ENCODE measurements at regions of chr17 and their contacts with region 1.

Region 1: DNA sequence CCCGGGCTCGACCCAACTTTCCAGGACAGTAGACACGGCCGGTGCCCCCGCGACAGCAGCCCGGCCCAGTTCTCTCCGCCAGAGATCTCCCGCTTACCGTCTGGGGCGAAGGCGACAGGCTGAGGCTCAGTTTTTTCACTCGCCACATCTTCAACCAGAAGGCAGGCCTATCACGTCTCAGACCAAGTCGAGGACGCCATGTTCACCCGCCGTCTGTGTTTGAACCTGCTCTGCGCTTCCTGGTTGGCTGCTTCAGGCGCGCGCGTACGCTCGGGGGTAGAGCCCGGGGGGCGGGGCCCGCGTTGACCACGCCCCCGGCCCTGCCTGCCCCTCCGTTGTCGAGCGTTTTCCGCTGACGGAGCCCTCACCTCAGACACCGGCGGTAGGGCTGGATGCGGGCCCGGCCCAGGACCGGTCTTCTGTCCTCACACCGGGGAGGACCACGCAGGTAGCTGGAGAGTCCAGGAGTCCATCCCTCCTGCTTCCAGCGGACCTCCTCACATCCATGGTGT is at the start of gene SPAG5:
- DNase-seq: peak; percentile 84 to 97 (median 93)
- ATAC-seq: peak; percentile 94 to 98 (median 95)
- H3K4me3 ChIP-seq: peak within 1 kb of the TSS; percentile 59 to 84
- H3K4me3 Mint-ChIP-seq: peak within 1 kb of the TSS; percentile 86 to 94 (median 89)
- H3K27ac ChIP-seq: peak within 1 kb of the TSS; percentile 93
- H3K27ac Mint-ChIP-seq: peak within 1 kb of the TSS; percentile 97
- H3K4me1 ChIP-seq: peaks cover 4 to 13% of the 10 kb centered on the region in 2 experiments
- H3K4me1 Mint-ChIP-seq: peaks cover 20 to 26% (median 22%) of the 10 kb centered on the region in 3 donors
- H3K27me3 ChIP-seq: no peaks in the 10 kb centered on the region
- H3K27me3 Mint-ChIP-seq: no peaks in the 10 kb centered on the region
- total RNA-seq, gene SPAG5: 7.7 to 26.5 (median 10.3) TPM

Region 2: DNA sequence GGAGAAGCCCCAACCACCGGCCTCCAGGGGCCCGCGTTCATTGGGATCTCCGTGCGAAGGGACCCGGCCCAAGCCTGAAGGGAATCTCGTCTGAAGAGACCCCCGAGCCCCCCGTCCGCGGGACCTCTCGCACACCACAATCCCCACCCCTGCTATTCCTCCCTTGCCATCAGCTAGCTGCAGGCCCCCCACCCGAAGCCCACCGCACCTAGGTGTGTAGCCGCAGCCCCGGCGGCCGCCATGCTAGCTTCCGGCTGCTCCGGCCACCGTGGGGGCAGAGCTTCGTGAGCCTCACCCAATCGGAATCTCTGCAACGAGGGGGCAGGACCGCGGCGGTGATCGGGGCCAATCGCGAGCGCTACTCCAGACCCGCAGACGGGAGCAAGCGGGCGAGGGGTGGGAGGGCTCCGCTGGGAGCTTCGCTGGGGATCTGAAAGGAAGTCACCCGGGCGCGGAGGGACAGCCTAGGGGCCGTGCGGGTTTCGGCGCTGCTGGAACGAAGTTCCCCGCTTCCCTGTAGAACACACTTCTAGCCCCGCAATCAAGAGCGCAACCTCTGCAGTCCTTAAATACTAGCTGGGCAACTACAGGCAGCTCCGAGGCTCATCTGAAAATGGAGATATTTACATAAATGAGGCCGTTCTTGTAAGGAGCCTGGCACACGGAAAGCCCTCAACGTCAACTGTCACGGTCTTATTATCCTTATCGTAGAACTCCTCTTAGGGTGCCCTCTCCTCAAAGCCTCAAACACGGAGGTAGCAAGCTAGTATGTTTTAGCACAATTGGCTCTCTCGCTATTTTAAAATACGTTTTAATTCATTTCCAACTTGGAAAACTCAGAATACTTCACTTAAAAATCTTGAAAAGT is 27.4 kb before region 1 on chr17 and contains the start of gene PIGS:
- CTCF ChIA-PET with region 1: interaction called in 1 of 2 experiments, 9 read pairs
- POLR2A ChIA-PET with region 1: interaction called, 3 to 15 read pairs
- DNase-seq: peak; percentile 73 to 93 (median 85)
- ATAC-seq: peak; percentile 97 to 98 (median 98)
- H3K4me3 ChIP-seq: peak within 1 kb of the TSS; percentile 86 to 95
- H3K4me3 Mint-ChIP-seq: peak within 1 kb of the TSS; percentile 93 to 97 (median 97)
- H3K27ac ChIP-seq: peak within 1 kb of the TSS; percentile 83
- H3K27ac Mint-ChIP-seq: peak within 1 kb of the TSS; percentile 92 to 93
- H3K4me1 ChIP-seq: peaks cover 18 to 47% of the 10 kb centered on the region in 2 experiments
- H3K4me1 Mint-ChIP-seq: peaks cover 61 to 72% (median 68%) of the 10 kb centered on the region in 3 donors
- H3K27me3 ChIP-seq: no peaks in the 10 kb centered on the region
- H3K27me3 Mint-ChIP-seq: no peaks in the 10 kb centered on the region
- total RNA-seq, gene PIGS: 54.9 to 63.0 (median 60.9) TPM

Region 3: GRCh38 chr17:28576758-28577465 is 21.9 kb before region 1 on chr17 and contains the start of gene ALDOC:
- CTCF ChIA-PET with region 1: interaction called in 1 of 2 experiments, 9 read pairs
- POLR2A ChIA-PET with region 1: interaction called, 3 to 15 read pairs
- DNase-seq: peak; percentile 95 to 100 (median 98)
- ATAC-seq: peak; percentile 96 to 99 (median 96)
- H3K4me3 ChIP-seq: peak within 1 kb of the TSS; percentile 38 to 40
- H3K4me3 Mint-ChIP-seq: peak within 1 kb of the TSS; percentile 78 to 85 (median 80)
- H3K27ac ChIP-seq: peak within 1 kb of the TSS; percentile 54
- H3K27ac Mint-ChIP-seq: peak within 1 kb of the TSS; percentile 87 to 95
- H3K4me1 ChIP-seq: peaks cover 8 to 33% of the 10 kb centered on the region in 2 experiments
- H3K4me1 Mint-ChIP-seq: peaks cover 29 to 39% (median 38%) of the 10 kb centered on the region in 3 donors
- H3K27me3 ChIP-seq: no peaks in the 10 kb centered on the region
- H3K27me3 Mint-ChIP-seq: no peaks in the 10 kb centered on the region
- total RNA-seq, gene ALDOC: 27.0 to 31.0 (median 28.4) TPM

Region 4: GRCh38 chr17:28634206-28634856 is 35.5 kb after region 1 on chr17:
- CTCF ChIA-PET with region 1: no interaction called
- POLR2A ChIA-PET with region 1: interaction called in 1 of 2 experiments, 12 read pairs
- DNase-seq: no peak
- ATAC-seq: no peak
- H3K4me3 ChIP-seq: no peak overlapping the region
- H3K4me3 Mint-ChIP-seq: no peak overlapping the region
- H3K27ac ChIP-seq: no peak overlapping the region
- H3K27ac Mint-ChIP-seq: no peak overlapping the region
- H3K4me1 ChIP-seq: peaks cover 0 to 6% of the 10 kb centered on the region in 2 experiments
- H3K4me1 Mint-ChIP-seq: peaks cover 14 to 35% (median 23%) of the 10 kb centered on the region in 3 donors
- H3K27me3 ChIP-seq: no peaks in the 10 kb centered on the region
- H3K27me3 Mint-ChIP-seq: no peaks in the 10 kb centered on the region

Region 5: GRCh38 chr17:28684963-28685362 is 86.1 kb after region 1 on chr17:
- CTCF ChIA-PET with region 1: no interaction called
- POLR2A ChIA-PET with region 1: no interaction called
- DNase-seq: no peak
- ATAC-seq: no peak
- H3K4me3 ChIP-seq: no peak overlapping the region
- H3K4me3 Mint-ChIP-seq: no peak overlapping the region
- H3K27ac ChIP-seq: no peak overlapping the region
- H3K27ac Mint-ChIP-seq: no peak overlapping the region
- H3K4me1 ChIP-seq: no peaks in the 10 kb centered on the region
- H3K4me1 Mint-ChIP-seq: no peaks in the 10 kb centered on the region
- H3K27me3 ChIP-seq: no peaks in the 10 kb centered on the region
- H3K27me3 Mint-ChIP-seq: no peaks in the 10 kb centered on the region